Activated CD4-positive, alpha-beta T cell treated with anti-CD3 and anti-CD28 coated beads, Interleukin-2, amount 10 ng/mL, durations not matched to agents 24 days and 14 days (primary cell): ENCODE measurements at regions of chr1 and their contacts with region 1.

Region 1: DNA sequence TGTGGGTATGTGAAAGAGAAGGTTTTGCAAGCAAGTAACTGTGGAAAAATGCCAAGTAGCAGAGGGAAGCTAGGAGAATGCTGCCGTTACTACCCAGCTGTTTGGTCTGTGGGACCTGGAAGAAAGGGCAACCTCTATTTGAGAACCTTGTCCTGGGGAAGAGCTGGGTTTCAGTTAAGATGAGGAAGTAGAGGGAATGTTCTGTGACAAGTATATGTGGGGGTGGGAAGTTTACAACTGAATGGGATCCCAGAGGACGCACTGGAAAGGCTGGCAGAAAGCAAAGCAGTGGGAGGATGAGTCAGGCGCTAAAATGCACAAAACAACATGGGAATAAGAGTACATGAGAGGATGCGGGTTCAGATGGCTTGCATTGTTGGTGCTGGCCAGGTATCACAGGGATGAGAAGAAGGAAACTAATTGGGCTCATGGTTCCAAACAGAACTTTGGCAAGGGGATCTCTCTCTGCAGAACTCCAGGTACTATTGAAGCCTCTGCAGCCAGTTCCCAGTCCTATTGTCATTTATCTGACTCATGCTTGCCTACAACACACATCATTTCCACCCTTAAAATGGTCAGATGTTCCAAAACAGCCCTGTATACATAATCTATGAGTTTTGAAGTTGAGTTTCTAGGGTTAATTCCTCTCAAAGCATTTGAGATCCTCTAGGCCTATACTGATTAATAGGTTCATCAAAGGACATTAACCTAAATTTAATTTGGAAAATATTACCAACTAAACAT is 88.5 kb upstream of the VAV3 start:
- DNase-seq: no peak
- H3K4me3 Mint-ChIP-seq: no peak overlapping the region
- H3K27ac Mint-ChIP-seq: no peak overlapping the region
- H3K4me1 Mint-ChIP-seq: peaks cover 22% of the 10 kb centered on the region
- H3K27me3 Mint-ChIP-seq: no peaks in the 10 kb centered on the region

Region 2: DNA sequence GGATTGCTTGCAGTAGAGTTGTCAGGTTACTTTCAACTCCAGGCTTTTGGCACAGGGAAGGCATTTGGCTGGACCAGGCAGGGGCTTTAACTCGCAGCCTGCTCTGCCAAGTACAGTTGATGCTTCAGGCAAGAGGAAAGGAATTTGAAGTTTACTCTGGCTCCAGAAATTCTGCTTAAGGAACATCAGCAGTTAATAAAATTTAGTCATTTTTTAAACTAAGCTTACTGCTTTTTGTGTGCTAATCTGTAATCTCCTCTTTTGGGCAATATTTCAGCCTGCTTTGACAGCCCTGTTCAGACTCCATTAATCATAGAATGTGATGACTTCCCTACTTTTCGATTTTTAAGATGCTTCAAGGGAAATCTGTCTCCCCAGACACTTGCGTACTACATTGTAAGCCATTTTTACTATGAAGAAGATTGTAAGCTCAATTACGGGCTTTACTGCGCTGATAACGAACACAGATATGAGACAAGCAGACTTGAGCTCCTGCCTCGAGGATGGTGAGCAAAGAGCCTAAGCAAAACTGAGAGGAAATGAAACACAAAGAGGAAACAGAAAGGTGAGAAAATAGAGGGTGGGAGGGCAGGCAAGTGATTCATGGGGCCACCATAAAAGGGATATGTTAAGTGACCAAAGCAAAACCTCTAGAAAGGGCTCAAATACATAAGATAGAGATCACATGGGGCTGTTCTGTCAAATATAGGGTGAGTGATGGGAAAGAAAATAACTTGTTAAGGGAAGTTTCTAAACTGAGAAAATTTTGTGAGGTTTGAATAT is 11.9 kb before region 1 on chr1:
- intact Hi-C with region 1: loop called (anchors 1 kb)
- DNase-seq: peak; percentile 57
- H3K4me3 Mint-ChIP-seq: peak overlapping the region; percentile 15
- H3K27ac Mint-ChIP-seq: peak overlapping the region; percentile 73
- H3K4me1 Mint-ChIP-seq: peaks cover 32% of the 10 kb centered on the region
- H3K27me3 Mint-ChIP-seq: no peaks in the 10 kb centered on the region

Region 3: DNA sequence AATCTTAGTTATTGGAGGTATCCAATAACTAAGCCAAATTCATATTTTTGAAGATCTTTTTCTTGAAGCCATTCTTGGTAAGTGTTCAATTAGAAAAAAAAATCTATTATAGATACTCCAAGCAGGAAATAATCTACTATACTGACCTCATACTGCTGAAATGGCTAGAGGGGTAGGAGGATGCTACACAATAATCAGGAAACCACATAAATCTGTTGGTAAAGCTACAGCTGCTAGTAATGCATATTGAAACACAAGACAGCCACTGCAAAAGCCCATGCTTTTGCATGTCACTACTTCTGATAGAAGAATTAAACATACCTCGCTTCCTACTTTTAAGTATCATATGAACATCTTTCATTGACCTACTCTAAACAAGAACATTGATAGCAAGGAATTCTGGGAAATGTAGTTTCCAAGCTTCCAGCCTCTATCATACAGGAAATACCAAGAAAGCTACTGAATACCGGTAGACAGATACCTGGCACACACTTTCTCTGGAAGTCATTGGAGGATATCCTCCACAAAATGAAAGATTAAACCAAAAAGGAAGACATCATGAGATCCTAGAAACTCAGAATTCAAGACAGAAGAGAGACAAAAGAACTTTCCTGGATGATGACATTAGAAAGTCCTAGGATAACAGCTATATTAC is 14.6 kb after region 1 on chr1:
- intact Hi-C with region 1: no loop called
- DNase-seq: no peak
- H3K4me3 Mint-ChIP-seq: no peak overlapping the region
- H3K27ac Mint-ChIP-seq: no peak overlapping the region
- H3K4me1 Mint-ChIP-seq: peaks cover 17% of the 10 kb centered on the region
- H3K27me3 Mint-ChIP-seq: peaks cover 3% of the 10 kb centered on the region

Region 4: DNA sequence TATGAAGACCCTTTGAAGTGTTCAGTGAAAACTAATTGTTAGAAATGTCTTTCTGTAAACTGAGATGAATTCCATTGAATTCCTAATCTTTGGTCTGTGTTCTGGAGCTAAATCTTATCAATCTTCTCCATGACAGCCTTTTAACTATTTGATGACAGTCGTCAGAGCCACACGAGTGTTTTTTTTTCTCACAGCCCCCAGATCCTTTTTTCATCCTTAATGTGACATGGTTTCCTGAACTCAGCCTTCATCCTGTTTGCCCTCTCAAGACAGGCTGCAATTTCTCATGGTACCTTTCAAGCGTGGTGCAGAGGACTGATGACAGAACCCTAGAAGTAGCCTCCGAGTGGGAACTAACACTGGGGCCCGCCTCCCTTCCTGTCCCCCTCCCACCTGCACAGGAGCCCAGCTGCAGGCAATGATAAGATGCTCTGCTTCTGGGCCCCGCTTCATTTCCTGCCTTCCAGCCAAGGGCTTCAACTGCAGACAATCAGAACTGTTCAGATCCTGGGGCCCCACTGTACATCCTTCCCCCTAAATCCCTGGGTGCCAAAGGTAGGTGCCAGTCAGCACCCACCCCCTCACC is 26.1 kb after region 1 on chr1:
- intact Hi-C with region 1: loop called (anchors 1 kb)
- DNase-seq: peak; percentile 82
- H3K4me3 Mint-ChIP-seq: peak overlapping the region; percentile 55
- H3K27ac Mint-ChIP-seq: peak overlapping the region; percentile 58
- H3K4me1 Mint-ChIP-seq: peaks cover 53% of the 10 kb centered on the region
- H3K27me3 Mint-ChIP-seq: no peaks in the 10 kb centered on the region

Region 5: GRCh38 chr1:108097018-108097417 is 43.6 kb after region 1 on chr1:
- intact Hi-C with region 1: no loop called
- DNase-seq: no peak
- H3K4me3 Mint-ChIP-seq: no peak overlapping the region
- H3K27ac Mint-ChIP-seq: no peak overlapping the region
- H3K4me1 Mint-ChIP-seq: peaks cover 8% of the 10 kb centered on the region
- H3K27me3 Mint-ChIP-seq: peaks cover 4% of the 10 kb centered on the region